Sigmoid colon (tissue), 7 donors: ENCODE measurements at regions of chr4 and their contacts with region 1.

Region 1: DNA sequence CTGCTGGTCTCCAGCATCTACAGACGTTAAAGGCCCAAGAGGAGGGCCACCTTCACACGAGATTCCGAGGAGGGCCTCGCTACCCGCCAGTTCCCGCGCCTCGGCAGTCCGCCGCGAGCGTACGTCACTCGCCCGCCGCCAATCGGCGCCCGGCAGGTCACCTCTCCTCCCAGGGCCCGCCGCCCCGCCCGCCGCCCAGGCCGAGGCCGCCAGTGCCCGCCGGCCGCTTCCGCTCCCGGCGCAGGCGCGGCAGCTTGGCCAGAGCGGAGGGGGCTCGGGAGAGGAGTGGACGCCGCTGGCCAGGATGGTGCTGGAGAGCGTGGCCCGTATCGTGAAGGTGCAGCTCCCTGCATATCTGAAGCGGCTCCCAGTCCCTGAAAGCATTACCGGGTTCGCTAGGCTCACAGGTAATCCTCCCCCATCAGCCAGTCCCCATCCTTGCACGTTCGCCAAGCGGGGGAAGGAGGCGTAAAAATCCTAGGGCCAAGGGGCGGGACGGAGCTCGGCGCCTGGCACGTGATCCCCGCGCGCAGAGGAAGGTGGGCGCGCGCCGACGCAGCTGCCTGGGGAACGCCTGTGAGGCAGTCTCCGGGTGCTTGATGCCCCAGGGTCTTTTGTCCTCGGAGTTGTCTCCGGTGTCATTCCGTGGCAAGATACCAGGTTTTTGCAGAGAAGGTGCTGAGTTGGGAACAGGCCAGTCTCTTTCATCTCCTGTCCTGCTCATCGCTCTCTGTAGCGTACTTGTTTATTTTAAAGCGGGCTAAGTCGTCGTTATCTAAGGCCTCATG is at the start of gene CISD2:
- DNase-seq: peak; percentile 96
- H3K4me3 ChIP-seq: peak within 1 kb of the TSS; percentile 55 to 69 (median 67)
- H3K27ac ChIP-seq: peak within 1 kb of the TSS; percentile 90 to 98 (median 94)
- H3K4me1 ChIP-seq: peaks cover 0 to 24% (median 12%) of the 10 kb centered on the region in 4 donors
- H3K27me3 ChIP-seq: no peaks in the 10 kb centered on the region
- CTCF ChIP-seq: no peak
- EP300 ChIP-seq: peak in 1 of 4 donors; percentile 41
- POLR2A ChIP-seq: peak; percentile 80 to 88
- total RNA-seq, gene CISD2: 6.5 to 16.5 (median 12.7) TPM

Region 2: DNA sequence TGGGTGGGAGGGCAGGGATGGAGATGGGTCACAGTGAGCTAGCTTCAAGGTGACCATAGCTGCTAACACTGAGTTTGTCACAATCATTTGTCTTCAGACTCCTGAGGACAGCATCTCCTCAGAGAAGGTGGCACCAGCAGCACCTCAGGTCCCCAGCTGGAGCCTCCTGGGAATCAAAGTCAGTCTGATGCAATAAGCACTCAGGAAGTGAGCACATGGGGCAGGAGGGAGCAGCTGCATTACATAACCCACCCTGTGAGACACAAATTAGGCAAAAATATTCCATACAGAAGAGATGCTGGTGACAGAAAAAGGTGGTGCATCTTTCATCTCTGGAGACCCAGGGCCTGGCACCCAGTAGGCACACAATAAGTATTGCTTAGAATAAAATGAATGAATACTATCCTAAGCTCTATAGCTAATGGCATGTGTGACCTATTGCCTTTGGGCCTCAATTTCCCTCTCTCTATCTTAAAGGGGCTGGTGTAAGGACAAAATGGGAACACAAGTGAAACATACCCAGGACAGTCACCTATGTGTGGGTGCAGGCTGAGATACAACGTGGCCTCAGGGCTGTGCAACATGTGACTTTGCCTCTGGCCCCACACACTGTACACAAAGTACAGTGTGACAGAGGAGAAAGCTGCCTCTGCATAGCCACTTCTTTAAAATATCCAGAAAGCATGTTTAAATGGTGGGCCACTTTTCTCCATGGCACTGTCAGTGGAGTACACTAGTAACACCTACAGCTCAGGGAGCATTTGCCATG is 560.8 kb before region 1 on chr4:
- intact Hi-C with region 1: no loop called
- DNase-seq: no peak
- H3K4me3 ChIP-seq: no peak overlapping the region
- H3K27ac ChIP-seq: no peak overlapping the region
- H3K4me1 ChIP-seq: no peaks in the 10 kb centered on the region
- H3K27me3 ChIP-seq: no peaks in the 10 kb centered on the region
- CTCF ChIP-seq: no peak
- EP300 ChIP-seq: no peak
- POLR2A ChIP-seq: no peak

Region 3: GRCh38 chr4:102760645-102761295 is 108.2 kb before region 1 on chr4 and contains the start of gene MANBA:
- intact Hi-C with region 1: loop called (anchors 2 kb)
- DNase-seq: peak; percentile 90
- H3K4me3 ChIP-seq: peak within 1 kb of the TSS; percentile 52 to 99 (median 84)
- H3K27ac ChIP-seq: peak within 1 kb of the TSS; percentile 78 to 93 (median 82)
- H3K4me1 ChIP-seq: peaks cover 0 to 17% (median 10%) of the 10 kb centered on the region in 4 donors
- H3K27me3 ChIP-seq: no peaks in the 10 kb centered on the region
- CTCF ChIP-seq: no peak
- EP300 ChIP-seq: no peak
- POLR2A ChIP-seq: peak in 1 of 2 donors; percentile 32
- total RNA-seq, gene MANBA: 25.3 to 47.4 (median 44.8) TPM

Region 4: GRCh38 chr4:102826890-102827673 is 41.9 kb before region 1 on chr4 and contains the start of gene UBE2D3:
- intact Hi-C with region 1: loop called (anchors 1 kb)
- DNase-seq: peak; percentile 99
- H3K4me3 ChIP-seq: peak within 1 kb of the TSS; percentile 90 to 96 (median 93)
- H3K27ac ChIP-seq: peak within 1 kb of the TSS; percentile 99 to 100 (median 100)
- H3K4me1 ChIP-seq: peaks cover 4 to 43% (median 35%) of the 10 kb centered on the region in 4 donors
- H3K27me3 ChIP-seq: no peaks in the 10 kb centered on the region
- CTCF ChIP-seq: no peak
- EP300 ChIP-seq: peak in 2 of 4 donors; percentile 46 to 49
- POLR2A ChIP-seq: peak; percentile 59 to 82
- total RNA-seq, gene UBE2D3: 273 to 404 (median 305) TPM

Region 5: DNA sequence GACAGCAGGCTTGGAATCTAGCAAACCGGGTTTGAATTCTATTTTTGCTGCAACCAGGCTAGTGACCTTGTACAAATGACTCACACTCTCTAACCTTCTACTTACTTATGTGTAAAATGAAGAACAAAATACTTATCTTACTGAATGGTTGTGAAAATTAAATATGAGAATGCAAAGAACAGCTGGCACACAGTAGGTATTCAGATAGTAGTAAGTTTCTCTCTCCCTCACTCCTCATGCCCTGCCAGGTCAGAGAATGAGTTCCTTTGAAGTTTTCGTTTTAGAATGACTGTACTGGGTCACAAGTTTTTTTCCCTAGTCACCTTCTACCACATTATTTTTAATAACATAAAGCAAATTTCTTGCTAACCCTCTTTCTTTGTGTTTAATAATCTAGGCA is 32.8 kb after region 1 on chr4:
- intact Hi-C with region 1: no loop called
- DNase-seq: no peak
- H3K4me3 ChIP-seq: no peak overlapping the region
- H3K27ac ChIP-seq: no peak overlapping the region
- H3K4me1 ChIP-seq: no peaks in the 10 kb centered on the region
- H3K27me3 ChIP-seq: no peaks in the 10 kb centered on the region
- CTCF ChIP-seq: no peak
- EP300 ChIP-seq: no peak
- POLR2A ChIP-seq: no peak

Region 6: GRCh38 chr4:103019308-103020124 is 150.5 kb after region 1 on chr4 and contains the start of gene SLC9B1:
- intact Hi-C with region 1: loop called (anchors 2 kb)
- DNase-seq: peak; percentile 99
- H3K4me3 ChIP-seq: peak within 1 kb of the TSS; percentile 30 to 52 (median 48)
- H3K27ac ChIP-seq: peak within 1 kb of the TSS; percentile 84 to 89 (median 89)
- H3K4me1 ChIP-seq: peaks cover 0 to 13% (median 9%) of the 10 kb centered on the region in 4 donors
- H3K27me3 ChIP-seq: no peaks in the 10 kb centered on the region
- CTCF ChIP-seq: no peak
- EP300 ChIP-seq: peak in 3 of 4 donors; percentile 37 to 94 (median 77)
- POLR2A ChIP-seq: peak; percentile 78 to 82
- total RNA-seq, gene SLC9B1: 0.82 to 3.9 (median 1.2) TPM in 3 of 4 donors, not detected in the other

Region 7: GRCh38 chr4:103075901-103076739 is 207.1 kb after region 1 on chr4:
- intact Hi-C with region 1: loop called (anchors 10 kb)
- DNase-seq: peak; percentile 86
- H3K4me3 ChIP-seq: peak overlapping the region; percentile 60 to 84 (median 64)
- H3K27ac ChIP-seq: peak overlapping the region; percentile 84 to 95 (median 88)
- H3K4me1 ChIP-seq: peaks cover 0 to 16% (median 8%) of the 10 kb centered on the region in 4 donors
- H3K27me3 ChIP-seq: no peaks in the 10 kb centered on the region
- CTCF ChIP-seq: no peak
- EP300 ChIP-seq: no peak
- POLR2A ChIP-seq: no peak

Region 8: GRCh38 chr4:103198111-103198765 is 329.3 kb after region 1 on chr4 and contains the start of gene CENPE:
- intact Hi-C with region 1: loop called (anchors 2 kb)
- DNase-seq: peak; percentile 90
- H3K4me3 ChIP-seq: peak within 1 kb of the TSS; percentile 50 to 76 (median 64)
- H3K27ac ChIP-seq: peak within 1 kb of the TSS; percentile 67 to 75 (median 70)
- H3K4me1 ChIP-seq: peaks cover 0 to 5% (median 4%) of the 10 kb centered on the region in 4 donors
- H3K27me3 ChIP-seq: no peaks in the 10 kb centered on the region
- CTCF ChIP-seq: no peak
- EP300 ChIP-seq: no peak
- POLR2A ChIP-seq: no peak
- total RNA-seq, gene CENPE: 0.49 to 1.4 (median 1.1) TPM